ENCODE measurements at regions of chr4 and their contacts with region 1.

Region 1: DNA sequence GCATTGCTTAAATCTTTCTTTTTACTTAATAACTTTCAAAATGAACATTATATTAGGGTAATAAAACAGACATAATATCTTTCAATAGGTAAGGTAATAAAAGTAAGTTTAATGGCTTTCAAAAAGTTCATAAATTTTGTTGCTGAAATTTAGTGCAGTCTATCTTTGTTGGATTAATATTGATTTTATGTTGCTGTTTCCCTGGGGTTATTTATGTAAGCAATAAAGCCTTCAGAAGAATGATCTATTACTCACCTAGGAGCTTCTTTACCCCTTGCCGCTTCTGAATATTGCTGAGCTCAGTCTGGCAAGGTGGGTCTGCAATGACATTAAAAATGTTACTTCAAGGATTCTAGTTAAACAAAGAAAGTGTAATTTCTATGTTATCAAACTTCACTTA is 492.6 kb downstream of the SPOCK3 start:
- DNase-seq: no peak

Region 2: GRCh38 chr4:166726832-166727231 is 14.9 kb before region 1 on chr4:
- intact Hi-C with region 1: loop called in 1 of 2 experiments (anchors 1 kb)
- DNase-seq: no peak

Region 3: DNA sequence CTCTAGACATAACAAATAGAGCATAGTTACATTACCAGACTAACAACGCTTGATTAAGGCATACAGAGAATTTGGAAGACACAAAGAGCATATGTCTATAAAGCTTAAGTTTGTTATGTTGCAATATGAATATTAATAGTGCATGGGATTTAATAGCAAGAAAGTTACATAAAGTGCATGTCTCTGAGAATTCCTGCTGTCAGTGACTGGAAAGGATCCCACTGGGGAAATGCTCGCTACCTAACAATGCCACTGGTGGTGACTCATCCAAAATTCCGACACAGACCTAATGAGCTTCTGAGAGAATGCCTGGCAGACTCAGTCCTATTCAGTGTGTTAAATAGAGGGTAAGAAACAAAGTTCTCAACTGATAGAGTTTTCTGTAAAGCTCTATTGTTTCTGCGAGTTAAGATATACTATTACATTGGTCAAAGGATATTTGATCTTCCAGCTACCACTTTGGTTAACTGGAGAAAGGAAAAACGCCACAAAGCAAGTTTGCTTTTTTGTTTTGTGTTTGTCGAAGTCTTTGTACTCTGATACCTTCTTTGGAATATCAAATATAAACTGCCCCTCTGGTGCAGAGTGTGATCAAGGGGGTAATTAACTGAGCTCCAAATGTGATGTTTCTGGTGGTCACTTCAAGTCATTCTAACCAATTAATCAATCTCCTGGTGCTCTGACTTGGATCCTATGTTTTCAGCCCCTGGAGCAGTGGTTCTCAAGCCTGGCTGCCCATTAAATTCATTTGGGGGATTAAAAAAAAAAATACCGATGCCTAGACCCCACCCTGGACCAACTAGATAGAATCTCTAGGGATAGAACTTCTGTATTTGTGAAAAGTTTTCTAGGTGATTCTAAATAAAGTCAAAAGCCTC is 1863.0 kb after region 1 on chr4:
- intact Hi-C with region 1: no loop called
- DNase-seq: no peak